ENCODE measurements at regions of chr1 and their contacts with region 1.

Region 1: GRCh38 chr1:234309598-234310459 is 63.4 kb upstream of the COA6 start:
- DNase-seq: peak; percentile 41 to 72
- ATAC-seq: peak; percentile 89

Region 2: DNA sequence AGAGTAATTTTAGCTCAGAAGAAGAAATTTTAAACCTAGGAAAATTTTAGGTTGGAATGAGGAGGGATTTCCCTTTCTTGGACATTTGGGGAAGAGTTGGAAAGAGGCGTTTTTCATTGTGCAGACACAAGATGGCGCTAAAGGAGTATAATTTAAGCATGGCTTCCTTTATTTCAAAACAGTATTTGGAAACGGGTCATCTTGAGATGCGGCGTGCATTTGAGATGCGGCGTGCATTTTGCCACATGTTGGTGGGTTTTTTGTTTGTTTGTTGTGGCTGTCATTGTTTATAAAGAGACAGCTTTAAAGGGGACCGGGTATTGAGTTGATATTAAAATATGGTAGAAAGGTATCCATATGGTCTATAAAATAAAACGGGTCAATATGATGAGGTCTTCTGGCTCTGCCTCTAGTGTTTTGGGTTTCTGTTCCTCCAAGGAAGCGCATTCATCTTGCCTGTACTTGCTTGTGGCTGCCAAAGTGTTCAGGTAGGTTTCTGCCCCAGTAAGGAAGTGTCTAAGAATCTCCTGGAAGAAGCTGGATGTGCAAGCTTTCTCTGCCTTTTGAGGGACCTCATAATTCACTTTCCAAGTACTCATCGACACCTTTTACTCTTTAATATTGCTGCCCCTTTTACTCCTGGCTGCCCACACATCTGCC is 195.1 kb before region 1 on chr1:
- intact Hi-C with region 1: loop called in 1 of 2 experiments (anchors 10 kb)
- DNase-seq: peak in 1 of 2 donors; percentile 6
- ATAC-seq: no peak

Region 3: GRCh38 chr1:234230414-234230862 is 79.4 kb before region 1 on chr1:
- intact Hi-C with region 1: no loop called
- DNase-seq: no peak
- ATAC-seq: no peak